Naive thymus-derived CD8-positive, alpha-beta T cell (primary cell): ENCODE measurements at regions of chr3 and their contacts with region 1.

Region 1: DNA sequence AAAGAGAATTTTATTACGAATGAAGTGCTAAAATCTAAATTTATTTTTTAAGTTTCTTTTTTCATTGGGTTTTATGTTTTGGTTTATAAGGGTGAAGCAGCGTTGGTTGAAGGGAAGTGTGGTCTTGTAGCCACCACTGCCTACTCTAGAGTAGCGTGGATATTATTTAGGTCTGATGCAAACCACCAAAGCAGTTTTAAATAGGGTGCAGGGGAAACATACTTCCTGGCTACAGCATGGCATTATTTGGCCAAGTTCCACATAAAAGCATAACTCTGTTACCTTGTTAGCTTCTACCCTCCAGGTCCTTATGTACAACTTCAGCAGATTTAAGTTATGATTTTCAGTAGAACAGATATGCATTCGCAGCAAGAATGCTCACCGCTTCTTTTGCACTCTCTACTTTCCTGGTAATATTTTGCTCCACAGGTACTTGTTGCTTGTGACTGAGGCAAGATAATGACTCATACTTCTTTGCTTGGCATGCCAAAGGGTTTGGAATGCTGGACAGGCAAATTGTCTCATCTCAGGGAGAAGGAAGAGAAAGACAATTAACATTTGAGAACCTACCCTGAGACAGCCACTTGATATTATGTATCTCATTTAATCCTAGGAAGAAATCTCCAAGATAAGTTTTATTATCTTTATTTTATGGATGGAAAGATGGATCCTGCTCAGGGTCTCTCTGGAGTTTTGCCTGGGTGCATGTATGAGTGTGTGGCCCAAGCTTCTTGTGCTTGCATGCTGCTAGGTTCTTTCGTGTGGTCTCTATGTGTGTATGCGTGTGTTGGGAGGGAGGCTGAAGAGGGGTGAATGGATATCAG is 5.4 kb downstream of the TGFBR2 start:
- DNase-seq: peak in 3 of 10 donors; percentile 33 to 48 (median 45)
- ATAC-seq: peak; percentile 29 to 50
- H3K4me3 Mint-ChIP-seq: peak overlapping the region; percentile 77 to 99 (median 95)
- H3K27ac Mint-ChIP-seq: peak overlapping the region; percentile 92 to 100 (median 94)
- H3K4me1 Mint-ChIP-seq: peaks cover 33 to 84% (median 65%) of the 10 kb centered on the region in 4 donors
- H3K27me3 Mint-ChIP-seq: no peaks in the 10 kb centered on the region

Region 2: DNA sequence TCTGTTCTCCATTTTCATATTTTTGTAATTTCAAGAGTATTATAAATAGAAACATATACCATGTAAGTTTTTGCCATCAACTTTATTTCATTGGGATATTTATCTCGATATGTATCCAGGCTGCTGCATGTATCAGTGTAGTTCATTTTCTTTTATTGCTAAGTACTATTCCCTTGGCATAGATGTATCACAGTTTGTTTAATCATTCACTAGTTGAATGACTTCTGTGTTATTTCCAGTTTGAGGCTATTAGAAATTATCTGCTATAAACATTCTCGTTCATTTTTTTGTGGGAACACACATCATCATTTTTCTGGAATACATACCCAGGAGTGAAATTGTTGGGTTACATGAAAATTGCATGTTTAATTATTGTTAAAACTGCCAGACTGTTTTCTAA is 23.9 kb before region 1 on chr3:
- POLR2A ChIA-PET with region 1: no interaction called
- DNase-seq: no peak
- ATAC-seq: no peak
- H3K4me3 Mint-ChIP-seq: no peak overlapping the region
- H3K27ac Mint-ChIP-seq: peak overlapping the region in 1 of 10 donors; percentile 61
- H3K4me1 Mint-ChIP-seq: peaks cover 0 to 3% (median 2%) of the 10 kb centered on the region in 4 donors
- H3K27me3 Mint-ChIP-seq: no peaks in the 10 kb centered on the region

Region 3: DNA sequence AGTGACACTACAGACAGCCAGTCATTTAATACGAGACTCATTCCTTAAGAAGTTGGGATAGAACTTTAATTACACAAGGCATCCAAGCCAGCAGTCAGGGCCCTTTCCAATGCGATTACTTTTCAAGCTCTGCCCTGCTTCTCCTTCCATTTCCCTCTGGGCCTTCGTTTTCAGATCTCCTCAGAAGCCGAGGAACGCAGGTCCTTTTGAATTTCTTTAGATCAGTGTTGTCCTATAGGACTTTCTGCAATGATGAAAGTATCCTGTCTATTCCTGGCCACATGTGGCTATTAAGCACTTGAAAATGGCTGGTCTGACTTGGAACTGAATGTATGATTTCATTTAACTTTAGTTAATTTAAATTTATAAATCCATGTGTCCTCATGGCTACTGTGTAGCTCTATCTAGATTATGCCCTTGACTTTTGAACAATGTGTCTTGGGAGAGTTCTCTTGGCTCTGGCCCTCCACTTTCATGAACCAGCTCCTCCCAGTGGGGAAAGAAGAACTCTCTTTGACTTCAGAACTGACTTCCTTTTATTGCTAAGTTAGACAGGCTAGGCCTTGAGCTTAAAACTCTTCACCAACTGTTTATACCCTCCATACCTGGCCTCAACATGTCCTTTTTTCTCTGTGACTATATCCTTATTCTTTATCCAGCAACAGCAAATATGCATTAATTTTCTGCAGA is 17.2 kb after region 1 on chr3:
- POLR2A ChIA-PET with region 1: interaction called, 215 read pairs
- DNase-seq: peak in 1 of 10 donors; percentile 48
- ATAC-seq: peak; percentile 7 to 22
- H3K4me3 Mint-ChIP-seq: peak overlapping the region; percentile 38 to 82 (median 76)
- H3K27ac Mint-ChIP-seq: peak overlapping the region; percentile 91 to 100 (median 96)
- H3K4me1 Mint-ChIP-seq: peaks cover 46 to 99% (median 87%) of the 10 kb centered on the region in 4 donors
- H3K27me3 Mint-ChIP-seq: no peaks in the 10 kb centered on the region

Region 4: GRCh38 chr3:30644593-30645012 is 32.8 kb after region 1 on chr3:
- POLR2A ChIA-PET with region 1: interaction called, 215 read pairs
- DNase-seq: peak in 8 of 10 donors; percentile 47 to 75 (median 65)
- ATAC-seq: peak; percentile 72 to 76
- H3K4me3 Mint-ChIP-seq: peak overlapping the region; percentile 60 to 87 (median 80)
- H3K27ac Mint-ChIP-seq: peak overlapping the region; percentile 91 to 100 (median 96)
- H3K4me1 Mint-ChIP-seq: peaks cover 52 to 98% (median 89%) of the 10 kb centered on the region in 4 donors
- H3K27me3 Mint-ChIP-seq: no peaks in the 10 kb centered on the region

Region 5: DNA sequence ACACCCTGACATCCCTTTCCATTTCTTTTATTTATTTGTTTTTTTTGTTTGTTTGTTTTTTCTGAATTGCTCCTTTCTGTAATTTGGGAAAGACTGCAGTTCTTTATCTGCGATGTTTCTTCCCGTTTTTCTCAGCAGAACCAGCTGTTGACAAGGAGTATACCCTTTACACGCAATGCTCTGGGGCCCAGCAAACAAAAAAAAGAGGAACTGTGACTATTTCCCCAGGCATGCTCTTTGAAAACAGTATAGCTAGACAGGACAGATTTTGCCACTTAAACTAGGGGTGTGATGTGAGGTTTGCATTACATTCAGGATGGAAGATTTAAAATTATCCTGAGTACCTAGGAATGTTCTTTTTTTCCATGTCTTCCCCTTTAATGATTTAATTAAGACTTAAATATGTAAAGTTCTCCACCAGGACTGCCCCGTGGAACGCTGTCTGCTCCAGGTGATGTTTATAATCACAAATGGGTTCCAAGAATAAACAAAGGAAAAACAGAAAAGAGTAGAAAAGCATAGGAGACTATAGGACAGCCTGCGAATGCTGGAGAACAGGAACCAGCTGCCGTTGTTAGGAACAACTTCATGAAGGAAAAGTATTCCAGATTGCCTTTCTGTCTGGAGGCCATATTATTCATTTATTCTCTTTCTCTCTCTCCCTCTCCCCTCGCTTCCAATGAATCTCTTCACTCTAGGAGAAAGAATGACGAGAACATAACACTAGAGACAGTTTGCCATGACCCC is 37.9 kb after region 1 on chr3:
- POLR2A ChIA-PET with region 1: interaction called, 315 read pairs
- DNase-seq: no peak
- ATAC-seq: no peak
- H3K4me3 Mint-ChIP-seq: peak overlapping the region; percentile 6 to 72 (median 60)
- H3K27ac Mint-ChIP-seq: peak overlapping the region; percentile 71 to 100 (median 98)
- H3K4me1 Mint-ChIP-seq: peaks cover 48 to 98% (median 97%) of the 10 kb centered on the region in 4 donors
- H3K27me3 Mint-ChIP-seq: no peaks in the 10 kb centered on the region

Region 6: DNA sequence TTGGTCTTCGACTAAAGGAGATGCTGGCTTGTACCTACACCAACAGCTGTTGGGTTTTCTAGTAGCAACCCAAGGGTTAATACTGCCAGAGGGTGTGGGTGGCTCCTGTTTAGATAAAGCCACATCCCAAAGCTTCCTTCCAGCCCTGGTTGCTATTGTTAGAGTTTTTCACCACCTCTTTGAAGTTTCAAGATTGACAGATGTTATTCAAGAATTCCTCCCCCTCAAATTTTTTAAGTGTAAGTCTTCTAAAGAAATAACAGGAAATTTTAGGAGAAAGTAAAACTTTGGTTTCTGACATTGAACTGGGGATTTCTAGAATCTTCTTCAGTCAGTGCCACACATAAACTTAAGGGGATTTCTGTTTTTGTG is 55.4 kb after region 1 on chr3:
- POLR2A ChIA-PET with region 1: interaction called, 29 read pairs
- DNase-seq: peak in 7 of 10 donors; percentile 37 to 67 (median 48)
- ATAC-seq: peak; percentile 37 to 57
- H3K4me3 Mint-ChIP-seq: peak overlapping the region; percentile 46 to 73 (median 64)
- H3K27ac Mint-ChIP-seq: peak overlapping the region; percentile 65 to 100 (median 90)
- H3K4me1 Mint-ChIP-seq: peaks cover 53 to 99% (median 95%) of the 10 kb centered on the region in 4 donors
- H3K27me3 Mint-ChIP-seq: no peaks in the 10 kb centered on the region

Region 7: DNA sequence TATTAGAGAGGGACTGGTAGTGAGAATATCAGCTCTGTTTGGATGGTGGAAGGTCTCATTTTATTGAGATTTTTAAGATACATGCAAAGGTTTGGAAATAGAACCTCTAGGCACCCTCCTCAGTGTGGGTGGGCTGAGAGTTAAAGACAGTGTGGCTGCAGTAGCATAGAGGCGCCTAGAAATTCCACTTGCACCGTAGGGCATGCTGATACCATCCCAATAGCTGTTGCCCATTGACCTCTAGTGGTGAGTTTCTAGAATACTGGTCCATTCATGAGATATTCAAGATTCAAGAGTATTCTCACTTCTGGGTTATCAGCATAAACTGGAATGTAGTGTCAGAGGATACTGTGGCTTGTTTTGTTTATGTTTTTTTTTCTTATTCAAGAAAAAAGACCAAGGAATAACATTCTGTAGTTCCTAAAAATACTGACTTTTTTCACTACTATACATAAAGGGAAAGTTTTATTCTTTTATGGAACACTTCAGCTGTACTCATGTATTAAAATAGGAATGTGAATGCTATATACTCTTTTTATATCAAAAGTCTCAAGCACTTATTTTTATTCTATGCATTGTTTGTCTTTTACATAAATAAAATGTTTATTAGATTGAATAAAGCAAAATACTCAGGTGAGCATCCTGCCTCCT is 81.8 kb after region 1 on chr3:
- POLR2A ChIA-PET with region 1: interaction called, 32 read pairs
- DNase-seq: peak in 9 of 10 donors; percentile 25 to 75 (median 62)
- ATAC-seq: peak; percentile 75 to 87
- H3K4me3 Mint-ChIP-seq: peak overlapping the region in 6 of 10 donors; percentile 10 to 70 (median 42)
- H3K27ac Mint-ChIP-seq: peak overlapping the region; percentile 4 to 100 (median 89)
- H3K4me1 Mint-ChIP-seq: peaks cover 39 to 93% (median 85%) of the 10 kb centered on the region in 4 donors
- H3K27me3 Mint-ChIP-seq: no peaks in the 10 kb centered on the region